ENCODE measurements at regions of chr11 and their contacts with region 1.

Region 1: DNA sequence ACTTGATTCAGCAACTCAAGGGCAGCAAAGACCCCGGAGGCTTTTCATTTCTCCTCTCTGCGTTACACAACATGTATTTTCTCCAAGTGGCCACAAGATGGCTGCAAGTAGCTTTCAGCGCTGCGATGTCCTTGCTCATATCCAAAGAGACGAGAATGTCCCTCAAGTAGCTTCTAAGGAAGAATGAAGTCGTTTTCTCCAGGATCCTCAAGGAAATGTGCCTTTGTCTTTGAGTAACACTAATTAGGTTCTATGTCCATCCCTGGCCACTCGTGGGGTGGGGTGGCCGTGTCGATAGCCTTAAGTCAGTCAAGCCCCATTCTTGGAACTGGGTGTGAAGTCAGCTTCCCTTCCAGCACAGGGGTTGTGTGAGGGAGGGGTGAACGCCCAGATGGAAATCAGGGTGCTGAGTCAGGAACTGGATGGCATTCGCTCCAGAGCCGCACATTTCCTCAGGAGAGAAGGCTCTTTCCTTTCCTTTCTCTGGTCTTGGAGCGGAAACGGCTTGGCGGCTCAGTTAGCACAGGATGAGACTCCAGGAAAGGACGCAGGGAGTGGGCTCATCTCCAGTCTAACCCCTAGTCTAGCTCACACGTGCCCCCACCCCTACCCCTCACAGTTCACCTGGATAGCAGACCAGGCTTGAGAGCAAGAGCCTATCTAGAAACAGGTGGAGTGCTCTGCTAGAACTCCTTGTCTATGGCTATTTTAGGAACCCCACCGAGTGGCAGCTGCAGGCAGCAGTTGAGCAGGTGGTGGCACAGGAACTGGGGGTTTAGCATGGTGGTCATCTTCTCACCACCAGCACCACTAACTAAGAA is 44.3 kb downstream of the NNMT start:
- DNase-seq: peak; percentile 36 to 68 (median 37)
- ATAC-seq: peak; percentile 61 to 90 (median 84)
- H3K4me3 ChIP-seq: peak overlapping the region in 9 of 12 donors; percentile 19 to 43 (median 36)
- H3K27ac ChIP-seq: peak overlapping the region in 11 of 12 donors; percentile 30 to 67 (median 53)
- H3K4me1 ChIP-seq: peaks cover 0 to 16% (median 7%) of the 10 kb centered on the region in 12 donors
- H3K27me3 ChIP-seq: no peaks in the 10 kb centered on the region
- CTCF ChIP-seq: peak; percentile 72 to 90 (median 76)
- POLR2A ChIP-seq: no peak

Region 2: GRCh38 chr11:114280696-114281095 is 59.8 kb before region 1 on chr11:
- intact Hi-C with region 1: loop called in 5 of 10 experiments (anchors 2 to 10 kb)
- DNase-seq: peak; percentile 55 to 69 (median 64)
- ATAC-seq: peak; percentile 48 to 92 (median 80)
- H3K4me3 ChIP-seq: no peak overlapping the region
- H3K27ac ChIP-seq: peak overlapping the region in 6 of 12 donors; percentile 30 to 67 (median 48)
- H3K4me1 ChIP-seq: peaks cover 0 to 27% (median 14%) of the 10 kb centered on the region in 12 donors
- H3K27me3 ChIP-seq: no peaks in the 10 kb centered on the region
- CTCF ChIP-seq: peak; percentile 41 to 81 (median 70)
- POLR2A ChIP-seq: peak in 1 of 2 donors; percentile 23

Region 3: DNA sequence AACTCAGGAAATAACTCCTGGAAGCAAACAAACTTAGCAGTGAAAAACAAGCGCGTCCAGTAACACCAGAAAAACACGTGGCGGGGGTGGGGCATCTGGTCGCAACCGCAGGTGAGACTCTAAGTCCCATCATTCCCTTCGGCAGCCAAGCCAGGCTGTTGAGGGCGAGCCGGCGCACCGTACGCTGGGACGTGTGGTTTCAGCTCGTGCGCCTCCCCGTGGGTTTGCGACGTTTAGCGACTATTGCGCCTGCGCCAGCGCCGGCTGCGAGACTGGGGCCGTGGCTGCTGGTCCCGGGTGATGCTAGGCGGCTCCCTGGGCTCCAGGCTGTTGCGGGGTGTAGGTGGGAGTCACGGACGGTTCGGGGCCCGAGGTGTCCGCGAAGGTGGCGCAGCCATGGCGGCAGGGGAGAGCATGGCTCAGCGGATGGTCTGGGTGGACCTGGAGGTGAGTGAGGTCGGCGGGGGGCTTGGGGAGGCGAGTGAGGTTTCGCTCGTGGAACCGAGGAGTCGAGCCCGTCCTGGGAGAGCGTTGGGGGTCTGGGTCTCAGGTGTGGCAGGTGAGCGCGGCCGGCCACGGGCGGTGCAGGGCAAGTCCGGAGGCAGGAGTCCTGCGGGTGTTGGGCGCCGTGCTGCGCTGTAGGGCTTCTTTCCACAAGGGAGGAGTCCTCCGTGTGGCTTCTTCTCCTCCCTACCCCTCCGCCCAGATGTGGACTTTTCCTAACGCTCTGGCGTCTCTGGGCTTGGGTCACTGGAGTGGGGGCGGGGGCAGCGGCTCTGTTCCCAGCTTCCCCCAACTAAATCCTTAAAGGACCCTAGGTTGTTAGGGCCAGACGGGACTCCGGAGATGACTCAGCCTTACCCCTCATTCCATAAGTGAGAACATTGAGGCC is 99.0 kb after region 1 on chr11 and contains the start of gene REXO2:
- intact Hi-C with region 1: loop called in 2 of 10 experiments (anchors 10 kb)
- DNase-seq: peak; percentile 95 to 98 (median 97)
- ATAC-seq: peak; percentile 98 to 99 (median 98)
- H3K4me3 ChIP-seq: peak within 1 kb of the TSS; percentile 66 to 96 (median 88)
- H3K27ac ChIP-seq: peak within 1 kb of the TSS; percentile 35 to 95 (median 88)
- H3K4me1 ChIP-seq: peaks cover 0 to 43% (median 21%) of the 10 kb centered on the region in 12 donors
- H3K27me3 ChIP-seq: no peaks in the 10 kb centered on the region
- CTCF ChIP-seq: peak in 8 of 12 donors; percentile 9 to 62 (median 28)
- POLR2A ChIP-seq: peak in 1 of 2 donors; percentile 85
- total RNA-seq, gene REXO2: 158 to 235 (median 195) TPM

Region 4: GRCh38 chr11:114606003-114606801 is 265.7 kb after region 1 on chr11:
- intact Hi-C with region 1: loop called in 4 of 10 experiments (anchors 10 kb)
- DNase-seq: no peak
- ATAC-seq: no peak
- H3K4me3 ChIP-seq: no peak overlapping the region
- H3K27ac ChIP-seq: no peak overlapping the region
- H3K4me1 ChIP-seq: no peaks in the 10 kb centered on the region
- H3K27me3 ChIP-seq: no peaks in the 10 kb centered on the region
- CTCF ChIP-seq: no peak
- POLR2A ChIP-seq: no peak

Region 5: DNA sequence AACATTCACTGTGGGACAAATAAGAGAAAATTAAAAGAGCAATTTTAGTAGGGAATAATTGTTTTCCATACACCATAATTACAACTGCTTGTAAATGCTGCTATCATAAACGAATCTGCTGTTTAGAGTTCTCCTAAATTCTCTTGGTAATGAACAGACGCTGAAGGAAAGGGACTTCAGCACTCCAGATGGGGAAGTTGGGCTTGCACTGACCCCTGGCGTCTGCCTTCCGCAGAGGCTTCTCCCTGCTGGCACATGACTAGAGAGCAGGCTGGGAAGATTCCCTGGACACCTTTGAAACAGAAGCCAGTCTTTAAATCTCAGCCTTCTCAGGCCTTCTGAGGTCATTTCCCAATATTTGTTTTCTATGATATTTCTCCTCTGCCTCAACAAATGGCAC is 421.9 kb after region 1 on chr11:
- intact Hi-C with region 1: loop called in 9 of 10 experiments (anchors 2 to 10 kb)
- DNase-seq: peak; percentile 41 to 74 (median 59)
- ATAC-seq: peak in 3 of 4 donors; percentile 85 to 88 (median 85)
- H3K4me3 ChIP-seq: no peak overlapping the region
- H3K27ac ChIP-seq: no peak overlapping the region
- H3K4me1 ChIP-seq: no peaks in the 10 kb centered on the region
- H3K27me3 ChIP-seq: no peaks in the 10 kb centered on the region
- CTCF ChIP-seq: peak; percentile 54 to 81 (median 68)
- POLR2A ChIP-seq: no peak